Posterior vena cava (tissue), 2 donors: ENCODE measurements at regions of chr9 and their contacts with region 1.

Region 1: GRCh38 chr9:121811751-121812150 is 160.3 kb downstream of the DAB2IP start:
- DNase-seq: no peak

Region 2: GRCh38 chr9:121650217-121651007 is 161.3 kb before region 1 on chr9:
- intact Hi-C with region 1: loop called in 1 of 2 experiments (anchors 2 kb)
- DNase-seq: peak; percentile 83

Region 3: DNA sequence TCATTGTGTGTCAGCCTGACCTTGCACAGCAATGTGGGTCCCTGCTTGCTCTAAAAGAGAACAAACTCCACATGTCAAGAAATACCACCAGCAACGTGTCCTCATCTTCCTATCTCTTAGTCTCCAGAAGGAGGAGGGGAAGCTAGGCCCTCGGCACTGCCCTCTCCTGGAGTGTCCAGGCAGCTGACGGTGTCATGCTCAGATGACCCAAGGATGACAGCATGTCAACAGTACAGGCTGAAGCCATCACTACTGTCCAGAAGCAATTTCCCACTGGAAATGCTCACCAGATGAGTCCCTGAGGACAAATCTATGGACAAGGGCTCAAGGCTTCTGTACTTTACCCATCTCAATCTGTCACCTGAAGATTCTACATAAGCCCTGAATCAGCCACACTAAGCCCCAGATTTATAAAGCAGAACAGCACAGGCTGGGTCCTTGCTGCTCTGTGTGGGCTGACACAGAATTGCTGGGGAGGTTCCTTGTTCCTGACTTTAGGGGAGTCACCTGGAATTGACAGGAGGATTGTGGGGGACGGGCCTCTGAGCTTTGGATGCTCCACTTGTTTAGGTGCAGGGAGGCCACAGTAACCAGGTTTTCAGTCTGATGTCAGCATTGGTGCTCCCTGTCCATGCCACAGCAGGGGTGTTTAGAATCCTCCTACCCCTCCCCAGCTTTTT is 49.9 kb after region 1 on chr9:
- intact Hi-C with region 1: no loop called
- DNase-seq: no peak